ENCODE measurements at regions of chr17 and their contacts with region 1.

Region 1: DNA sequence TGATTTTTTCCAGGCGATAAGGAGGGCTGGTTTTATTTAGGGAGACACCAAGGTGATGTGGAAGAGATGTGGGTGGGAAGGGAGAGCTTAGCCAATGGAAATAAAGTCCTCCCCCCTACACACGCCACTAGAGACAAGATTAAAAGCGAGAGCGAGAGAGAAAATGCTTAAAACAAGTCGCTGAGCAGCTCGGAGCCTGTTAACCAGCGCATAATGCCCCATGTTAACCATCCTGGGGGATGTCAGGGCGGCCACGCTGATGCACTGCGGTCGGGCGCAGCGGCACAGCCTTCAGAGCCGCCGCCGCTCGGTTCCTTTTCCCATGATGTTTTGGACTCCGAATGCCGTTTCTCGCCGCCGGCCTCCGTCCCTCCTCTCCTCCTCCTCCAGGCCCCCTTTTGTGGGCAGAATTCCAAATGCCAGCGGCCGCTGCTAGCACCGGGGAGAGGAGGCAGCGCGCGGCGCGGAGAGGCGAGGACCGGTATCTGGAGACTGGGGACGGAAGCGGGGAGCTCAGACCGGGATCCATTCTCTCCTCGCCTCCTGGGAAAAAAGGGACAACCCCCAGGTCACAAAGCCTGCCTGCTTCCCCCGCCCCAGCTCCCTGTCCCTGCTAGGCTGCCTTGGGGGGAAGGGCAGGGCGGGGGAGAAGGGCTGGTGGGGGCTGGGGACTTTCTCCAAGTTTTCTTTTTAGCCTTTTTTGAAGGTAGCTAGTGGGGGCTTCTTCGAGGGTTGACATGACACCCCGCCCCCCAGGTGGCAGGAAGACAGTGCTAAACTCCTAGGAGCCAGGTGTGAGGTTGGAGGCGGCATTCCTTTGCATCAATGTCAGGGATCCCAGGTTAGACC is 98.1 kb upstream of the CCL2 start:
- DNase-seq: no peak
- ATAC-seq: no peak

Region 2: GRCh38 chr17:33908363-33909064 is 248.5 kb before region 1 on chr17:
- intact Hi-C with region 1: no loop called
- DNase-seq: no peak
- ATAC-seq: no peak

Region 3: GRCh38 chr17:33927732-33928133 is 229.2 kb before region 1 on chr17:
- intact Hi-C with region 1: loop called (anchors 10 kb)
- DNase-seq: no peak
- ATAC-seq: no peak

Region 4: DNA sequence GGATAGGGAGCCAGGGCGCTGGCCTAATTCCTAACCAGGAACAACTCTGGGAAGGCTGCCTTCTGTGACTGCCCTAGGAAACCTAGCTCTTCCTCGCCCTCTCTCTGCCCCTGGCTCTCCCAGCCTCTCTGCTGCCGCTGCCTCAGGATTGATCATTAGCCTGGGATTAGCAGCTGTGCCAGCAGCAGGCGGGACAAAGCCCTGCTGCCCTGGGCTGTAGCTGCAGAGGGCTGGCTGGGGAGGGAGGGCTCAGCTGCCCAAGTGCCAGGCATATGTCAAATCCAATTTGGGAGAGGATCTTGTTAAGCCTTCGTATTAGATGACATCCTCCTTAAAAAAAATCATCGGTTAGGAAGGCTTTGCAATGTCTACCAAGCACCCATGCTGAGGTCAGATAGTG is 46.6 kb before region 1 on chr17:
- intact Hi-C with region 1: no loop called
- DNase-seq: no peak
- ATAC-seq: no peak

Measured in left ventricle myocardium superior (tissue), 1 donor.